Breast epithelium (tissue), 4 donors: ENCODE measurements at regions of chr1 and their contacts with region 1.

Region 1: DNA sequence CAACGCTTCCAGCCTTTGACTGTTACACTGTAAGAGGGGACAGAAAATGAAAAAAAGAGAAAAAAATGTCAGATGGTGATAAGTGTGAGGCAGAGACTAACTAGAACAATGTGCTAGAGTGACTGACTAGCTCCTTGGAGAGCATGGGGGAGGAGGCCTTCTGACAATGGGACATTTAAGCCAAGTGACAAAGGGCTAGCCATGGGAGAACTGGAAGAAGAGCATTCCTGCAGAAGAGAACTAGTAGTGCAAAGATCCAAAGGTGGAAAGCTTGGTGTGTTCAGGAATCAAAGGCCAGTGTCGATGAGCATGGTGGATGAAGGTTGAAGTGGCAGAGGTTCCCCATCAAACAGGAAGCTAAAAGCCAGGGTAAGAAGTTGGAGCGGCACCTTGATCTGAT is 25.8 kb downstream of the STYXL2 start:
- DNase-seq: no peak
- H3K4me3 ChIP-seq: no peak overlapping the region
- H3K27ac ChIP-seq: no peak overlapping the region
- H3K4me1 ChIP-seq: no peaks in the 10 kb centered on the region
- H3K27me3 ChIP-seq: peaks cover 0 to 2% of the 10 kb centered on the region in 2 donors
- CTCF ChIP-seq: no peak
- POLR2A ChIP-seq: no peak

Region 2: GRCh38 chr1:167107456-167107855 is 12.2 kb before region 1 on chr1:
- intact Hi-C with region 1: loop called (anchors 1 kb)
- DNase-seq: no peak
- H3K4me3 ChIP-seq: no peak overlapping the region
- H3K27ac ChIP-seq: no peak overlapping the region
- H3K4me1 ChIP-seq: no peaks in the 10 kb centered on the region
- H3K27me3 ChIP-seq: no peaks in the 10 kb centered on the region
- CTCF ChIP-seq: no peak
- POLR2A ChIP-seq: no peak